ENCODE measurements at regions of chr4 and their contacts with region 1.

Region 1: GRCh38 chr4:142265536-142265935 is 580.6 kb downstream of the INPP4B start:
- DNase-seq: no peak
- H3K4me3 ChIP-seq: no peak overlapping the region
- H3K27ac ChIP-seq: peak overlapping the region in 1 of 2 experiments; percentile 43; a peak in 2 of 4 replicates
- H3K4me1 ChIP-seq: no peaks in the 10 kb centered on the region
- H3K27me3 ChIP-seq: no peaks in the 10 kb centered on the region
- CTCF ChIP-seq: no peak
- EP300 ChIP-seq: peak in 1 of 2 experiments; percentile 34; a peak in 1 of 4 replicates
- RAD21 ChIP-seq: no peak

Region 2: GRCh38 chr4:142282870-142283431 is 17.4 kb after region 1 on chr4:
- CTCF ChIA-PET with region 1: interaction called, 10 read pairs
- POLR2A ChIA-PET with region 1: no interaction called
- DNase-seq: no peak
- H3K4me3 ChIP-seq: peak overlapping the region in 1 of 2 experiments; percentile 42; a peak in 1 of 4 replicates
- H3K27ac ChIP-seq: no peak overlapping the region
- H3K4me1 ChIP-seq: no peaks in the 10 kb centered on the region
- H3K27me3 ChIP-seq: no peaks in the 10 kb centered on the region
- CTCF ChIP-seq: peak; percentile 55
- EP300 ChIP-seq: no peak
- RAD21 ChIP-seq: peak; percentile 42; the same call in 1 of the 2 replicates

Measured in SK-N-SH (cell line).